Sciatic nerve (tissue), 2 donors: ENCODE measurements at regions of chr1 and their contacts with region 1.

Region 1: DNA sequence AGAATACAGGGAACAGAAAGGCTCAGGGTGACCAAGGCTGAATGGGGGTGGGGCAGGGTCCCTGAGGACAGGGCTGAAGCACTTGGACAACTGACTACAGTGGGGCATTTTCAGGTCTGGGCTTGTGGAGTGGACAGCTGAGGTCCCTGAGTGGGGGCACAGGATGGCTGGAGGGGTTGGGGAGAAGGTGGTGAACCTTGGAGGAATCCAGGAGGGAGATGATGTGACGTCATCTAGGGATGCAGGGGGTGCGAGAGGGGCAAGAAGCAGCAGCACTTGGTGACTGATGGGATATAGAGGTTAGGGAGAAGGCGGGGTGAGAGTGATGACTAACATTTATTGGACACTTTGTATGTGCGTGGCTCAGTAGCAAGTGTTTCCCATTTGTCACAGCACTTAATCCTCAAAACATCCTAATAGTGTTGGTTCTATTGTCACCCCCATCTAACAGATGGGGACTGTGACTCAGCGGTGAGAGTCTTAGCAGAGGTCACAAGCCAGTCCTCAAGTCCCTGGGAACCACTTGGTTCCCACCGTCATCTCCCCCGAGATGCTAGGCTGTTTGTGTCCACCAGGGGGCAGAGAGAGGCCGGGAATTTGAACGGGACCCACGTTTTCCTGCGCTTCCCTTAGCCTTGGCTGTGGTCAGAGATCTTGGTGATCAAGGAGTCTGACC is 27.9 kb upstream of the BMP8B start:
- DNase-seq: peak; percentile 68
- ATAC-seq: peak; percentile 89

Region 2: DNA sequence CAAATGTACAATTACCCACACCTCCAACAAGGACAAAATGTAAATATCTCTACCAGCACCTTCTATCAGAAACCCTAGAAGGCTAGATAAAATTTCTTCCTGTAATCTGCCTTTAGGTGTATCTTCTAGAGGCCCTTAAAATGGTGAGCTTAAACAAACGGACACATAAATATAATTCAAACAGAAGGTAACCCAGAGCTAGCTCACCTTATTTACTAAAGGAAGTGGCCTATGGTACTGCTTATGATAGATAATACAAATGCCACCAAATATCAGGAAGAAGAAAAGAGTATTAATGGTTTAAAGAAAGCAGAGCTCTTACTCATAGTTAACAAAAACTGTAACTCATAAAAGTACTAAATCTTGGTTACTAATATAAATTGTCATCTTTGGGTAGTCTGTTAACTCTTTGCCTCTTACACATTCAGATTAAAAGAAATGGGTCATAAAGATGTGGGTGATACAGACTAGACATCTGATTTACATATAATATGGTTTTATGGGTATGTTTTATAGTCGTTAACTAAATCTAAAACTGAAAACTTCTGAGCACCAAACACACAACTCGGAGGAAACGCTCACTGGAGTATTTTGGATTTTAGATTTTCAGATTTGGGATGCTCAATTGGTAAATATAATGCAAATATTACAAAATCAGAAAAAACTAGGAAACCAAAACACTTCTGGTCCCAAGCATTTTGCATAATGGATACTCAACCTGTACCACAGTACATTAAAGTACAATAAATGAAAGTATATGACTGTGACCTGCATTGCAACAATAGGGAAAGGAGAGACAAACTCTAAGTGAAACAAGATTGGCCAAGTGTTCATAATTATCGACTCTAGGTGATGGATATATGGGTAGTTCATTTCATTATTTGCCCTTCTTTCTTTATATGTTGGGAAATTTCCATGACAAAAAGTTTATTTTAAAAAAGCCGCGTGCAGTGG is 43.6 kb after region 1 on chr1:
- intact Hi-C with region 1: no loop called
- DNase-seq: no peak
- ATAC-seq: no peak

Region 3: DNA sequence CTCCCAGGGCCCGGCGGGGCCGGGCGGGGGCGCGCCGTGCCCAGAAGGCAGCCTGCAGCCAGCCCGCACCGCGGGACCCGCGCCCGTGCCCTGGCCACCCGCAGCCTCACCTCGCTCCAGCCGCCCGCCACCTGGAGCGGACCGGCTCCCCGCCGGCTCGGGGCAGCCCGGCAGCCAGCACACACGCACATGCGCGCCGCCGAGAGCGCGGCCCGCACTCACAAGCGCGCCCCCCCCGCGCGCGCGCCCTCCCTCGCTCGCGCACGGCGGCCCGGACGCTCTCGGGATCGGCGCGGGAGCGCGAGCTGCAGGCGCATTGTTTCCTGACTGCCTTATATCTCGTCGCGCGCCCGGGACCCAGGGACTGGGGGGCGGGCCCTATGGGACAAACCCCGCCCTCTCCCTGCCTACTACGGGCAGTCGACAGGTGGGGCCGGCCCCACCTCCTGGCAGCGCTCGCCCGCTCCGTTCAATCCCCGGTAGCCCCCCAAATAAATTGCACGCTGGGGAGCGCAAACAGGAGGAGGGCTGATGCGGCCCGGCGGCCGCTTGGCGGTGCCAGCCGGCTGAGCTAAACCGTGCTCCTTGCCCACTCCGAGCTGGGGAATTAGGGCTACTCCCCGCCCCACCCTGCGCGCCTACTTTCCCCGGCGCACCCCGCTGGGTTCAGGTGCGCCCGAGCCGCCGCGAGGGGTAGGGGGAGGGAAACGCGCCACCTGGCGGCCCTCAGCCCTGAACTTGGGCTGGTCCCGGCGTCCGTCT is 85.3 kb after region 1 on chr1 and contains the start of gene MYCL:
- intact Hi-C with region 1: loop called (anchors 5 kb)
- DNase-seq: peak; percentile 79
- ATAC-seq: peak; percentile 86
- total RNA-seq, gene MYCL: 2.5 TPM

Region 4: GRCh38 chr1:39973503-39974135 is 157.1 kb after region 1 on chr1:
- intact Hi-C with region 1: loop called (anchors 5 kb)
- DNase-seq: peak; percentile 87
- ATAC-seq: peak; percentile 86

Region 5: DNA sequence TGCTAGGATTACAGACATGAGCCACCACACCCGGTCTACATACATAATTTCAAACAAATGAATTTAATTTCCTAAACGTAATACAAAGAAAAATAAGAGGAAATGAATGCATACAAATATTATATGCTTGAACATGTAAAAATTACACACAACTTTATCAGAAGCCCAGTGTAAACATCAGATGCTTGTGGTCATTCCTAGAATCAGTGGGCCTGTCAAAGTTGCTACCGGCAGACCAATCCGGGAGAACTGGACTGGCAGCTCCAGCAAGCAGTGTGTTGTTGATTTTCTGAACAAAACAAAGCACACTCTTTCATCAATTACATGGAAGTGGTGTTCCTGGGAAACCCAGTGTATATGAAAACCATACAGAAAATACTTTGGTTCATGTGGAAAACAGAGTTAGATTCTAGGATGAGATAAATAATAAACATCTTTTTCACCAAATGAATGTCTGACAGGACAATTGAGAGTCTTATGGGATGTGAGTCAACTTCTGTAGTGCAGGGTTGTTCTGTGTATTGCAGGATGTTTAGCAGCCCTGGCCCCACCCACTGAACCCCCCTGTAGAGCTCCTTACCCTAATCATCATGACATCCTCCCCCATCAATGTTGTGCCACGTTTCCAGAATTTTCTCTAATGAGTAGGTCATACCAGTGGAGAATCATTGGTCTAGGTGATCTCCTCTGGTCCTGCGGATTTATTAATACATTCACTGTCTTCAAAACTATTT is 172.2 kb after region 1 on chr1:
- intact Hi-C with region 1: no loop called
- DNase-seq: no peak
- ATAC-seq: no peak